ENCODE measurements at regions of chr9 and their contacts with region 1.

Region 1: GRCh38 chr9:96217754-96218693 is 84.0 kb downstream of the HSD17B3 start:
- DNase-seq: peak; percentile 66 to 90
- H3K4me3 ChIP-seq: peak overlapping the region; percentile 29
- H3K4me3 Mint-ChIP-seq: peak overlapping the region; percentile 75
- H3K27ac Mint-ChIP-seq: peak overlapping the region; percentile 45
- H3K4me1 ChIP-seq: 0 out of 2 replicates have a peak, but pooled peaks cover 8% of the 10 kb centered on the region
- H3K4me1 Mint-ChIP-seq: no peaks in the 10 kb centered on the region
- H3K27me3 ChIP-seq: no peaks in the 10 kb centered on the region
- H3K27me3 Mint-ChIP-seq: no peaks in the 10 kb centered on the region
- CTCF ChIP-seq: peak; percentile 96 to 97

Region 2: DNA sequence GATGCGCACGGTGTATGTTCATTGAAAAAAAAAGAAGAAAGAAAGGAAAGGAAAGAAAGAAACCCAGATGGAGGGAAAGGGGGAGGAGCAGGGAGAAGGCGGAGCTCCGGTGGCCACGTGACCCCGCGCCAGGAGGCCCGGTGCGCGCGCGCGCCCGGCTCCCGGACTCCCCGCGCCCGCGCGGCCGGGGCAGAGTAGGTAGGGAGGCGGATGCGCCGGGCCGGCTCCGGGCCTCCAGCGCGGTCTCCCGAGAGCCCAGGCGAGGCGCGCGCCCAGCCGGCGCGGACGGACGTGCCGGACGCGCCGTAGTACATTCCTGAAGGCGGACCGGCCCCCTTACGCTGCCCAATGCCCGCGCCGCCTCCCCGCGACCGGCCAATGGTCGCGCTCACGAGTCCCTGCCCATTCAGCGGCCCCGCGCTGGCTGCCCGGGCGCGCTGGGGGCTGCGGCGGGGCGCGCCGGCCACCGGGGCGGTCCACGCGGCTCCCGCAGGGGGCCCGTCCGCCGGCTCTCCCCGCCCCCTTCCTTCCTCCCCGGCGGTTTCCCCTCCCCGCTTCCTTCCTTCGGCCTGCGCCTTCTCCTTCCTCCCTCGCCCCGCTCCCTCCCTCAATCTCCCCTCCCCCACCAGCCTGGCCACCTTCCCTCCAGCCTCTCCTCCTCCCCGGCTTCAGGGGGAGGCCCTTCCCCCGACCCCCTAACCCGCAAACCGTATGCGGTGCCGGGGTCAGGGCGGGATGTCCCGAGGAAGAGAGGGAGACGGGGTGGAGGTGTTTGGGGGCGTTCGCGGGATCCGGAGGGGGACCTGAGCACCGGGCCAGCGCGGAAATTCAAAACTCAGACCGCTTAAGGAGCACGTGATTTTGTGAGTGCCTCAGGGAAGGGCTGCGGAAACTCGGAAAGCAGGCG is 707.1 kb before region 1 on chr9:
- CTCF ChIA-PET with region 1: no interaction called
- POLR2A ChIA-PET with region 1: no interaction called
- intact Hi-C with region 1: loop called (anchors 5 kb)
- DNase-seq: peak; percentile 96 to 97
- H3K4me3 ChIP-seq: peak overlapping the region; percentile 94
- H3K4me3 Mint-ChIP-seq: peak overlapping the region; percentile 93
- H3K27ac Mint-ChIP-seq: peak overlapping the region; percentile 87
- H3K4me1 ChIP-seq: peaks cover 11% of the 10 kb centered on the region; the same call in 1 of the 2 replicates
- H3K4me1 Mint-ChIP-seq: no peaks in the 10 kb centered on the region
- H3K27me3 ChIP-seq: no peaks in the 10 kb centered on the region
- H3K27me3 Mint-ChIP-seq: no peaks in the 10 kb centered on the region
- CTCF ChIP-seq: no peak

Region 3: DNA sequence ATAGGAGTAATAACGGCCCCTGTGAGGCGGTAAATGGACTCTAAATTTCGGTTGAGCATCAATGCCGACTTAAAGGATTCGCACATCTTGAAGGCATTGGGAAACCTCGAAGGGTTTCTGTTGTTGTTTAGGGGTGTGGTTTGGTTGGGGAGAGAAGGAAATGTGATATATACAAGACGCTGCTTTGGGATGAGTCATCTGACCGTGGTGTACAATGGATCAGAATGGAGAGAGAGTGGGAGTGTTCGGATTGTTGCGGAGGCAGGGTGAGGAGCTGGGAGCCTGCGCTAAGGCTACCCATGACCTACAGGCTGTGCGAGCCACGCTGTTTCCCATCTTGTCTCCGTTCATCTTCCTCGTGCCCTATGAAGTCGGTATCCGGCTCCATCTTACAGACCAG is 402.9 kb before region 1 on chr9:
- CTCF ChIA-PET with region 1: no interaction called
- POLR2A ChIA-PET with region 1: no interaction called
- intact Hi-C with region 1: no loop called
- DNase-seq: no peak
- H3K4me3 ChIP-seq: no peak overlapping the region
- H3K4me3 Mint-ChIP-seq: no peak overlapping the region
- H3K27ac Mint-ChIP-seq: no peak overlapping the region
- H3K4me1 ChIP-seq: peaks cover 10% of the 10 kb centered on the region
- H3K4me1 Mint-ChIP-seq: peaks cover 7% of the 10 kb centered on the region
- H3K27me3 ChIP-seq: no peaks in the 10 kb centered on the region
- H3K27me3 Mint-ChIP-seq: no peaks in the 10 kb centered on the region
- CTCF ChIP-seq: no peak

Region 4: DNA sequence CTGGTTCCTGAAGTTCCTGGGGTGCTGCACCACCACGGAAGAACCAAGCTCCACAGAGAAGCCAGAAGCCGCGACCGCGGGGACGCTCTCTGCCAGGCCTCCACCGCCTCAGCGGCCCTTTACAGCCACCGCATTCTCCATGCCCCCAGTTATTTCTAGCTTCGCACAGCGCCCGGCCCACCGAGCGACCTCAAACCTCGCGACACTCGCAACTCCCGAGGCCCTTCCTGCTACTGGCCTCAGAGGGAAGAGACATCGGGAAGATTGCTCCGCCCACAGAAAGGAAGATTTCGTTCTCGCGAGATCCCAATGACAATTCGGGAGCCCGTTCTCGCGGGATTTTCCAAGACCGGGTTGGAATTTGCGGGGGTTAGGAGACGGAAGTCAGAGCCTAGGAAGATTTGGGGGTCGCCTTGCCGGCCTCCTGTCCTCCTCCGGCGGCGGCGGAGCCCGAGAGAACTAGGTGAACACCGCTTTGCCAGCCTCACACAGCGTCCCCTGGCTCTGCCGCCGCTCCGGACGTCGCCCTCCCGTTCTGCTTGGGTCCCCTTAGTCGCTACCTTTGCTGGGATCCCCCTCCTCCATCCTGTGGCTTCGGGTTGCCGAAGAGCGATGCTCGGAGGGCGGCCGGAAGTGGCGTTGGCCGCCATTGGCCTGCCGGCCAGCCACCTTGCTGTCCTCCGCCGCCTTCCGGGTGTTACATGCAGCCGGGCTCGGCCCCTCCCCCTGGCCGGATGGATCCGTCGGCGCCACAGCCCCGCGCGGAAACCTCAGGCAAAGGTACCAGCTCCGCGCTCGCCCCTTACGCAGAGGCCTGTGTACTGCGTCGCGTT is 342.5 kb before region 1 on chr9 and contains the start of gene ERCC6L2:
- CTCF ChIA-PET with region 1: no interaction called
- POLR2A ChIA-PET with region 1: no interaction called
- intact Hi-C with region 1: loop called (anchors 5 kb)
- DNase-seq: peak; percentile 96 to 98
- H3K4me3 ChIP-seq: no peak within 1 kb of the TSS
- H3K4me3 Mint-ChIP-seq: no peak within 1 kb of the TSS
- H3K27ac Mint-ChIP-seq: no peak within 1 kb of the TSS
- H3K4me1 ChIP-seq: no peaks in the 10 kb centered on the region
- H3K4me1 Mint-ChIP-seq: no peaks in the 10 kb centered on the region
- H3K27me3 ChIP-seq: no peaks in the 10 kb centered on the region
- H3K27me3 Mint-ChIP-seq: no peaks in the 10 kb centered on the region
- CTCF ChIP-seq: no peak
- total RNA-seq, gene ERCC6L2: 45.4 and 46.1 TPM in 2 replicates

Region 5: GRCh38 chr9:96071076-96071814 is 146.8 kb before region 1 on chr9:
- CTCF ChIA-PET with region 1: no interaction called
- POLR2A ChIA-PET with region 1: no interaction called
- intact Hi-C with region 1: loop called (anchors 5 kb)
- DNase-seq: peak; percentile 53 to 54
- H3K4me3 ChIP-seq: no peak overlapping the region
- H3K4me3 Mint-ChIP-seq: no peak overlapping the region
- H3K27ac Mint-ChIP-seq: peak overlapping the region; percentile 26
- H3K4me1 ChIP-seq: peaks cover 31% of the 10 kb centered on the region
- H3K4me1 Mint-ChIP-seq: peaks cover 19% of the 10 kb centered on the region
- H3K27me3 ChIP-seq: no peaks in the 10 kb centered on the region
- H3K27me3 Mint-ChIP-seq: no peaks in the 10 kb centered on the region
- CTCF ChIP-seq: peak; percentile 51 to 63

Region 6: GRCh38 chr9:96317335-96317980 is 99.4 kb after region 1 on chr9:
- CTCF ChIA-PET with region 1: interaction called, 9 read pairs
- POLR2A ChIA-PET with region 1: no interaction called
- intact Hi-C with region 1: loop called (anchors 1 kb)
- DNase-seq: peak in 1 of 2 experiments; percentile 49
- H3K4me3 ChIP-seq: no peak overlapping the region
- H3K4me3 Mint-ChIP-seq: peak overlapping the region; percentile 17
- H3K27ac Mint-ChIP-seq: peak overlapping the region; percentile 65
- H3K4me1 ChIP-seq: 0 out of 2 replicates have a peak, but pooled peaks cover 3% of the 10 kb centered on the region
- H3K4me1 Mint-ChIP-seq: peaks cover 7% of the 10 kb centered on the region
- H3K27me3 ChIP-seq: no peaks in the 10 kb centered on the region
- H3K27me3 Mint-ChIP-seq: no peaks in the 10 kb centered on the region
- CTCF ChIP-seq: peak; percentile 74 to 87

Measured in Caco-2 (cell line).